B cell (primary cell): ENCODE measurements at regions of chr6 and their contacts with region 1.

Region 1: DNA sequence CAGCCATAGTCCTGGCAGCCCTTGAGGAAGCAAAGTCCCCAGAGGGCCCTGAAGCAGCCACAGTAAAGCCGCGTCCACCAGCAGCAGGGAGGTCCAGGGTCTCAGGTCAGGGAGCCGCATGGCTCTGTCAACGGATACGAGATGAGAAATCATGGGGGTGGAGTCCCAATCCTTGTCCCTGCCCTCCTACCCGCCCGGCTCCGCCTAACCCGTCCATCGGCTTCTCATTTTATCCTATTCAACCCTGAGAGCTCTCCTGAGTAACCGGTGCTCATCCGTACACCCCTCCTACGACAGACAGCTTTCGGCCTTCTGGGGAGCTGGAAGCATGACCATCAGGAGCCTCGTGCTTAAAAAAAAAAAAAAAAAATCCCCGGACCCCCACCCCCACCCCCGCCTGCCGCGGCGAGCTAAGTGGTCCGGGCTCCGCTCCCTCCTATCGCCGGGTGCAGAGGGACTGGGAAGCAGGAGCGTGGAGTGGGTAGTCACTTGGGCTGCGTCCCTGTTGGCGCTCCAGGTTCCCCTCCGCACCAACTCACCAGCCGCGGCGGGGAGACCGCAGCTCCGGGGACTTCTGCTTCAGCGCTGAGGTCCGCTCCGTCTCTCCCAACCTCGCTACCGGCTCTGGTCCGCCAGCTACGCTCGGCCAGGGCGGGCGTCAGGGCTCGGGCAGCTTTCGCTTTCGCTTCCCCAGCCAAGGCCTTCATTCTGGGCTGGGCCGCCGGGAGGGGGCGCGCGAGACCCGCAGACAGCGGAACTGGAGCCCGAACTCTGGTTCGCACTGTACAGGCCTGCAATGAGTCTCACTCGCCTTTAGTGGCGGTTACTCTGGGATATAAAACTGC is at the start of gene TAP2:
- DNase-seq: peak; percentile 97
- ATAC-seq: peak; percentile 84
- H3K4me3 ChIP-seq: peak within 1 kb of the TSS; percentile 71 to 80 (median 76)
- H3K4me3 Mint-ChIP-seq: peak within 1 kb of the TSS; percentile 97
- H3K27ac ChIP-seq: peak within 1 kb of the TSS; percentile 83 to 97
- H3K27ac Mint-ChIP-seq: peak within 1 kb of the TSS; percentile 99
- H3K4me1 ChIP-seq: peaks cover 59 to 73% of the 10 kb centered on the region in 2 donors
- H3K4me1 Mint-ChIP-seq: peaks cover 92% of the 10 kb centered on the region
- H3K27me3 ChIP-seq: no peaks in the 10 kb centered on the region
- H3K27me3 Mint-ChIP-seq: no peaks in the 10 kb centered on the region
- CTCF ChIP-seq: peak; percentile 90
- total RNA-seq, gene TAP2: 126 and 135 TPM in 2 replicates

Region 2: GRCh38 chr6:32816746-32817204 is 21.6 kb before region 1 on chr6 and contains the start of gene HLA-DOB:
- CTCF ChIA-PET with region 1: interaction called, 19 read pairs
- POLR2A ChIA-PET with region 1: interaction called, 5 read pairs
- intact Hi-C with region 1: loop called (anchors 1 kb)
- DNase-seq: peak; percentile 87
- ATAC-seq: peak; percentile 76
- H3K4me3 ChIP-seq: peak within 1 kb of the TSS; percentile 91 to 97 (median 95)
- H3K4me3 Mint-ChIP-seq: peak within 1 kb of the TSS; percentile 99
- H3K27ac ChIP-seq: peak within 1 kb of the TSS; percentile 92 to 98
- H3K27ac Mint-ChIP-seq: peak within 1 kb of the TSS; percentile 99
- H3K4me1 ChIP-seq: peaks cover 77 to 80% of the 10 kb centered on the region in 2 donors
- H3K4me1 Mint-ChIP-seq: peaks cover 90% of the 10 kb centered on the region
- H3K27me3 ChIP-seq: no peaks in the 10 kb centered on the region
- H3K27me3 Mint-ChIP-seq: no peaks in the 10 kb centered on the region
- CTCF ChIP-seq: no peak
- total RNA-seq, gene HLA-DOB: 109 TPM in 2 replicates

Region 3: DNA sequence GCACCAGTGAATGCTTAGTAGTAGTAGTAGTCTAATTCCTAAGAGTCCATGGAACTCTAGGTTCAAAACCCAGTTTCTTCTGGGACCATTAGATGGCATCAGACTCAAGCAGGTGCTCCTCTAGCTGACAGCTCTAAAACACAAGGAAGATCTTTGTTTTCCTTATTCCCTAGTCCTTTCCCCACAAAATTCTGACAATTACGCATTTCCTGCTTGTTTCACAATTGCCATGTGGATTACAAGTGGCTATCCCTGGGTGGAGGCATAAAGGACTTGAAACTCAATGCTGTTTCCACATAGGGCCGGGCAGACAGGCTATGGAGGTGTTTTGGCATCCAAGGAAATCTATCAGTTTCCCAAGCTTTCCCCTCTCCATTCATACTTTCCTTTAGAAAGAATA is 12.4 kb before region 1 on chr6:
- CTCF ChIA-PET with region 1: interaction called, 33 read pairs
- POLR2A ChIA-PET with region 1: interaction called, 6 read pairs
- intact Hi-C with region 1: no loop called
- DNase-seq: no peak
- ATAC-seq: no peak
- H3K4me3 ChIP-seq: no peak overlapping the region
- H3K4me3 Mint-ChIP-seq: no peak overlapping the region
- H3K27ac ChIP-seq: no peak overlapping the region
- H3K27ac Mint-ChIP-seq: no peak overlapping the region
- H3K4me1 ChIP-seq: peaks cover 11% of the 10 kb centered on the region in 2 donors
- H3K4me1 Mint-ChIP-seq: peaks cover 15% of the 10 kb centered on the region
- H3K27me3 ChIP-seq: no peaks in the 10 kb centered on the region
- H3K27me3 Mint-ChIP-seq: no peaks in the 10 kb centered on the region
- CTCF ChIP-seq: no peak

Region 4: GRCh38 chr6:32853541-32854375 is 15.4 kb after region 1 on chr6 and contains the starts of genes PSMB9 and TAP1:
- CTCF ChIA-PET with region 1: interaction called, 359 read pairs
- POLR2A ChIA-PET with region 1: interaction called, 282 read pairs
- intact Hi-C with region 1: loop called (anchors 1 kb)
- DNase-seq: peak; percentile 98
- ATAC-seq: peak; percentile 82
- H3K4me3 ChIP-seq: peak within 1 kb of the TSS; percentile 91 to 98 (median 94)
- H3K4me3 Mint-ChIP-seq: peak within 1 kb of the TSS; percentile 99
- H3K27ac ChIP-seq: peak within 1 kb of the TSS; percentile 98 to 99
- H3K27ac Mint-ChIP-seq: peak within 1 kb of the TSS; percentile 100
- H3K4me1 ChIP-seq: peaks cover 60 to 63% of the 10 kb centered on the region in 2 donors
- H3K4me1 Mint-ChIP-seq: peaks cover 75% of the 10 kb centered on the region
- H3K27me3 ChIP-seq: no peaks in the 10 kb centered on the region
- H3K27me3 Mint-ChIP-seq: no peaks in the 10 kb centered on the region
- CTCF ChIP-seq: peak; percentile 81
- total RNA-seq, gene PSMB9: 174 and 181 TPM in 2 replicates
- total RNA-seq, gene TAP1: 126 and 131 TPM in 2 replicates

Region 5: DNA sequence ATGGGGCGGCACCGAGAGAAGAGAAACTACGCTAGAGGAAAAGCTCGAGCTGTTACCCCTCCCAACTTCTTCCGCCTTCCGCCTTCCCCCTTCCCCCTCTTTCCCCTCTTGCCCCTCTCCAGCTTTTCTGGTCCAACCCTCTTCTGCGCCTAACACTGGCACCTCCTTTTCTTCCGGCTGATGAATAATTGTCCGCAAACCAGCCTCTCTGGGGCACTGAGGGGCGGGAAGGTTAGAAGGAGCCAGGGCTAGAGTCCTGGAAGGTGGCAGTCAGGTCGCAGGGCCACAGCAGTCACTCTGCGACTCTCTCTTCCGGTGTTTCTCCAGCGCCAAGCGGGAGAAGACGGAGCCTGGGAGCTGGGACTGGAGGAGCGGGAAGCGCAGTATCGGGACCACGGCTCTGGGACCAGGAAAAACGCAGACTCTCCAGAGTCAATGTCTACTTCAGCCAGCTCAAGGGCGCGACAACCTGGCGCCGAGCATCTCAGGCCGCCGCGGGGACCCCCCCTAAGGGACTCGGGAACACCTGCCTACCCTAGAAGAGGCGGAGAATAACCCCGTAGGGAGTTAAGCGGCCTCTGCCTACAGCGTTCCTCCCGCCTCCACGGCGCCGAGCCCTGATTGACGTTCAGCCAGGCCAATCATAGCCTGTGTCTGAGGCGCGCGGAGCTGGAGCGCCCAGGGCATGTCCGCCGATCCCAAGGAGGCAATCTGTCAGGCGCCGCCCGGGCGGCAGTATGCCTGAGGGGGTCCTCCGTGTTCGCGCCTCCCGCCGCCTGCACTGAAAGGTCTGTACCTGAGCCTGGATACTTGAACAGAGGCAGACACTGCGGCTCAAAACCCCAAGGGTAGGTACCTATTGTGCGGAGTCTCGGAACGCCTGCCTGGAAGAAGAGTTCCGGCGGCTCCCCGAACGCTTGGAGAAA is 56.0 kb after region 1 on chr6:
- CTCF ChIA-PET with region 1: interaction called, 5 read pairs
- POLR2A ChIA-PET with region 1: no interaction called
- intact Hi-C with region 1: loop called (anchors 2 kb)
- DNase-seq: peak; percentile 98
- ATAC-seq: peak; percentile 98
- H3K4me3 ChIP-seq: peak overlapping the region; percentile 84 to 96 (median 92)
- H3K4me3 Mint-ChIP-seq: peak overlapping the region; percentile 99
- H3K27ac ChIP-seq: peak overlapping the region; percentile 89 to 90
- H3K27ac Mint-ChIP-seq: peak overlapping the region; percentile 98
- H3K4me1 ChIP-seq: peaks cover 40 to 42% of the 10 kb centered on the region in 2 donors
- H3K4me1 Mint-ChIP-seq: peaks cover 60% of the 10 kb centered on the region
- H3K27me3 ChIP-seq: no peaks in the 10 kb centered on the region
- H3K27me3 Mint-ChIP-seq: no peaks in the 10 kb centered on the region
- CTCF ChIP-seq: no peak

Region 6: DNA sequence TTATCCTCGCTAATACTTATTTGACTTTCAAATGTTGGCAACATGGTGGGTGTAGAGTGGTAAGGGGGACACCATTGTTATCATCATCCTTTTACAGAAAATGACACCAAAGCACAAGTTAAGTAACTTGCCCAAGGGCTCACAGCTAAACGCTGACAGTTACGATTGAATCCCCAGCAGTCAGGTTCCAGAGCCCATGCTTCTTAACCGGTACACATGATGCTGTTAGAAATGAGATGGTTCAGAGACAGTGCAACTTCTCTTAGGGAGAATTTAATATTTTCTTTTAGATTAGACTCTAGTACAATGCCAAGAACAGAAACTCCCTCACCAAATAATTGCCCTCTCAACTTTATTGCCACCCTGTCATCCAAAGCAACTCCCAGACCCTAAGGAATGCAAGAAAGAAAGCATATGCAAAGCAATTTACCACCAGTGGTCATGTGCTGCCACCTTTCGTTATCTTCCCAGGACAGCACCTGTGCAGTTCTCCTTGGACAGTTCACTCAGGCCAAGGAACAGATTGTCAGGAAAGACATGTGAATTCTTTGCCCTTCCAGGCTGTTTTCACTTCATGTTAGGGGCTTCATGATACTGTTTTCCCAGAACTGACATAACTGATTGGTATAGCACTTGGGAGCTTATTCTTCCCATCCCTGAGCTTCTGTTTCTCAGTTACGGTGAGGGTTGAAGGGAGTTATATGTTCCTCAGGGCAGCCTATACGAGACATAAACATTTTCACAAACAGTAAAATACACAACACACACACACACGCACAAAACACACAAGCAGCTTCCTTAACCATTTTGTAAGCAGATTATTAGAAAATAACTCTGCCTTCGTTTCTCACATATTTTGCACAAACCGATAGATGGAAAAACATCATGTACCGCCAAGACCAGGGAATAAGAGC is 109.5 kb after region 1 on chr6:
- CTCF ChIA-PET with region 1: interaction called, 24 read pairs
- POLR2A ChIA-PET with region 1: interaction called, 17 read pairs
- intact Hi-C with region 1: no loop called
- DNase-seq: peak; percentile 76
- ATAC-seq: no peak
- H3K4me3 ChIP-seq: peak overlapping the region in 3 of 5 experiments; percentile 2 to 35 (median 6)
- H3K4me3 Mint-ChIP-seq: peak overlapping the region; percentile 84
- H3K27ac ChIP-seq: peak overlapping the region; percentile 97 to 98
- H3K27ac Mint-ChIP-seq: peak overlapping the region; percentile 92
- H3K4me1 ChIP-seq: peaks cover 80 to 94% of the 10 kb centered on the region in 2 donors
- H3K4me1 Mint-ChIP-seq: peaks cover 86% of the 10 kb centered on the region
- H3K27me3 ChIP-seq: no peaks in the 10 kb centered on the region
- H3K27me3 Mint-ChIP-seq: no peaks in the 10 kb centered on the region
- CTCF ChIP-seq: peak; percentile 70

Region 7: GRCh38 chr6:32952817-32953739 is 114.7 kb after region 1 on chr6 and contains the start of gene HLA-DMA:
- CTCF ChIA-PET with region 1: interaction called, 24 read pairs
- POLR2A ChIA-PET with region 1: interaction called, 8 read pairs
- intact Hi-C with region 1: no loop called
- DNase-seq: peak; percentile 97
- ATAC-seq: peak; percentile 91
- H3K4me3 ChIP-seq: peak within 1 kb of the TSS; percentile 72 to 98 (median 93)
- H3K4me3 Mint-ChIP-seq: peak within 1 kb of the TSS; percentile 96
- H3K27ac ChIP-seq: peak within 1 kb of the TSS; percentile 91 to 92
- H3K27ac Mint-ChIP-seq: peak within 1 kb of the TSS; percentile 98
- H3K4me1 ChIP-seq: peaks cover 70 to 84% of the 10 kb centered on the region in 2 donors
- H3K4me1 Mint-ChIP-seq: peaks cover 85% of the 10 kb centered on the region
- H3K27me3 ChIP-seq: no peaks in the 10 kb centered on the region
- H3K27me3 Mint-ChIP-seq: no peaks in the 10 kb centered on the region
- CTCF ChIP-seq: peak; percentile 88
- total RNA-seq, gene HLA-DMA: 554 and 558 TPM in 2 replicates